CD4-positive, alpha-beta T cell (primary cell): ENCODE measurements at regions of chr7 and their contacts with region 1.

Region 1: GRCh38 chr7:148884299-148885022 is 370 bp upstream of the EZH2 start:
- DNase-seq: peak; percentile 84 to 97 (median 90)
- ATAC-seq: peak; percentile 91
- H3K4me3 ChIP-seq: peak overlapping the region; percentile 88
- H3K4me3 Mint-ChIP-seq: peak overlapping the region; percentile 95
- H3K27ac ChIP-seq: peak overlapping the region; percentile 15 to 86
- H3K27ac Mint-ChIP-seq: peak overlapping the region; percentile 88
- H3K4me1 ChIP-seq: peaks cover 16% of the 10 kb centered on the region
- H3K4me1 Mint-ChIP-seq: peaks cover 30% of the 10 kb centered on the region
- H3K27me3 ChIP-seq: no peaks in the 10 kb centered on the region
- H3K27me3 Mint-ChIP-seq: no peaks in the 10 kb centered on the region
- CTCF ChIP-seq: no peak

Region 2: GRCh38 chr7:148385009-148385682 is 499.3 kb before region 1 on chr7:
- CTCF ChIA-PET with region 1: no interaction called
- POLR2A ChIA-PET with region 1: no interaction called
- intact Hi-C with region 1: no loop called
- DNase-seq: no peak
- ATAC-seq: no peak
- H3K4me3 ChIP-seq: no peak overlapping the region
- H3K4me3 Mint-ChIP-seq: no peak overlapping the region
- H3K27ac ChIP-seq: no peak overlapping the region
- H3K27ac Mint-ChIP-seq: no peak overlapping the region
- H3K4me1 ChIP-seq: no peaks in the 10 kb centered on the region
- H3K4me1 Mint-ChIP-seq: no peaks in the 10 kb centered on the region
- H3K27me3 ChIP-seq: no peaks in the 10 kb centered on the region
- H3K27me3 Mint-ChIP-seq: peaks cover 5% of the 10 kb centered on the region
- CTCF ChIP-seq: no peak

Region 3: DNA sequence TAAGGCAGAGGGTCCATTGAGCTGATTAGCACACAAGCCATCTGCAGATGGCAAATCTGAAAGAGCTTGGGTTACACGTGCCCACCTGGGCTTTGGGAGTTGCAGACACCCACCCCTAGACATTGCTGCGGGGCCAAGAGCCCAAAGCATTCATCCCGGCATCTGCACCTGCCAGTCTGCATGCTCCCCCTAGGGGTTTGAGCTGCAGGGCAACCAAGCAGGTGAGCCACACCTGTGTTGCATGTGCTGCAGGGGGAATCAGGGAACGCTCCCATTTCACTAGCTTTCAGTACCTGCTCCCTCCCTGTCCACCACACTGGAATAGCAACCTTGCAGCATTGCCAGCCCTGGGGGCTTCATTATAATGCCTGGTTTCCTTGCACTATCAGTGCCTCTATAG is 272.8 kb before region 1 on chr7:
- CTCF ChIA-PET with region 1: no interaction called
- POLR2A ChIA-PET with region 1: no interaction called
- intact Hi-C with region 1: no loop called
- DNase-seq: no peak
- ATAC-seq: no peak
- H3K4me3 ChIP-seq: no peak overlapping the region
- H3K4me3 Mint-ChIP-seq: no peak overlapping the region
- H3K27ac ChIP-seq: no peak overlapping the region
- H3K27ac Mint-ChIP-seq: no peak overlapping the region
- H3K4me1 ChIP-seq: peaks cover 6% of the 10 kb centered on the region
- H3K4me1 Mint-ChIP-seq: peaks cover 13% of the 10 kb centered on the region
- H3K27me3 ChIP-seq: peaks cover 0 to 4% of the 10 kb centered on the region in 2 experiments
- H3K27me3 Mint-ChIP-seq: peaks cover 33% of the 10 kb centered on the region
- CTCF ChIP-seq: no peak

Region 4: GRCh38 chr7:148856891-148857290 is 27.6 kb before region 1 on chr7:
- CTCF ChIA-PET with region 1: interaction called, 12 read pairs
- POLR2A ChIA-PET with region 1: interaction called, 9 read pairs
- intact Hi-C with region 1: loop called in 1 of 2 experiments (anchors 2 kb)
- DNase-seq: peak in 2 of 14 experiments; percentile 58 to 68
- ATAC-seq: no peak
- H3K4me3 ChIP-seq: no peak overlapping the region
- H3K4me3 Mint-ChIP-seq: no peak overlapping the region
- H3K27ac ChIP-seq: no peak overlapping the region
- H3K27ac Mint-ChIP-seq: no peak overlapping the region
- H3K4me1 ChIP-seq: peaks cover 6% of the 10 kb centered on the region
- H3K4me1 Mint-ChIP-seq: peaks cover 17% of the 10 kb centered on the region
- H3K27me3 ChIP-seq: no peaks in the 10 kb centered on the region
- H3K27me3 Mint-ChIP-seq: no peaks in the 10 kb centered on the region
- CTCF ChIP-seq: no peak

Region 5: GRCh38 chr7:148914208-148914777 is 29.8 kb after region 1 on chr7:
- CTCF ChIA-PET with region 1: no interaction called
- POLR2A ChIA-PET with region 1: interaction called, 37 read pairs
- intact Hi-C with region 1: loop called (anchors 2 kb)
- DNase-seq: peak in 3 of 14 experiments; percentile 17 to 34 (median 27)
- ATAC-seq: peak; percentile 19
- H3K4me3 ChIP-seq: no peak overlapping the region
- H3K4me3 Mint-ChIP-seq: peak overlapping the region; percentile 51
- H3K27ac ChIP-seq: peak overlapping the region; percentile 18 to 57
- H3K27ac Mint-ChIP-seq: peak overlapping the region; percentile 79
- H3K4me1 ChIP-seq: peaks cover 49% of the 10 kb centered on the region
- H3K4me1 Mint-ChIP-seq: peaks cover 65% of the 10 kb centered on the region
- H3K27me3 ChIP-seq: no peaks in the 10 kb centered on the region
- H3K27me3 Mint-ChIP-seq: no peaks in the 10 kb centered on the region
- CTCF ChIP-seq: no peak

Region 6: DNA sequence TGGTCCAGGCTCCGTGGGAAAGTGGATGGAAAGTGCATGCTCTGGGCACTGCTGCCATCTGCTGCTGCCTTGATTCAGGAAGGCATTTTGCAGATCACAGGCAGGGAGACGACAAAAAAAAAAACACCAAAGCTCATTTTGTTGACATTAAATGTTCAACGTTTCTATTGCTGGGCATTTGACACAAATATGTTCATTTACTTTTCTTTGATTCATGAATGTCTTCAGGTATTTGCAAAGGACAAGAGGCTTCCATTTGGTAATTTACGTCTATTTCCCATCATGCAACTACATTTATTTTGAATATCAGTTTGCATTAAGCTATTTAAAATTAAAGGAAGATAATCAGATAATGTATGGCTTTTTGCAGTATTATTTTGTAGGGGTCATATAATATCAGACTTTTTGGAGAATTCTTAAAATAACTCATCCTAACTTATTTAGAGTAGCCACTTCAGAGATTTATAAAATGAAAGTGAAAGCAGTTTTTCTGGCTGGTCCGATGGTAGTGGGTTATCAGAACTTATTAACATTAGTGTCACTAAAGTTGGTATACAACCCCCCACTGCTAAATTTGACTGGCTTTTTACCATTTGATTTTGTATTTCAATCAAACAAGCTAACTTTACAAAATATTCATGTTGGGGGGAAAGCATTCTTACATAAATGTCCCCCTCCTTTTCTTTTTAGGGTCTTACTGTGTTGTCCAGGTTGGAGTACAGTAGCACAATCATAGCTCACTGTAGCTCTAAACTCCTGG is 78.5 kb after region 1 on chr7:
- CTCF ChIA-PET with region 1: interaction called, 4 read pairs
- POLR2A ChIA-PET with region 1: interaction called, 10 read pairs
- intact Hi-C with region 1: no loop called
- DNase-seq: peak; percentile 42 to 85 (median 57)
- ATAC-seq: peak; percentile 66
- H3K4me3 ChIP-seq: peak overlapping the region; percentile 72
- H3K4me3 Mint-ChIP-seq: peak overlapping the region; percentile 94
- H3K27ac ChIP-seq: peak overlapping the region in 1 of 2 donors; percentile 80
- H3K27ac Mint-ChIP-seq: peak overlapping the region; percentile 89
- H3K4me1 ChIP-seq: peaks cover 28% of the 10 kb centered on the region
- H3K4me1 Mint-ChIP-seq: peaks cover 25% of the 10 kb centered on the region
- H3K27me3 ChIP-seq: no peaks in the 10 kb centered on the region
- H3K27me3 Mint-ChIP-seq: no peaks in the 10 kb centered on the region
- CTCF ChIP-seq: peak; percentile 95

Region 7: DNA sequence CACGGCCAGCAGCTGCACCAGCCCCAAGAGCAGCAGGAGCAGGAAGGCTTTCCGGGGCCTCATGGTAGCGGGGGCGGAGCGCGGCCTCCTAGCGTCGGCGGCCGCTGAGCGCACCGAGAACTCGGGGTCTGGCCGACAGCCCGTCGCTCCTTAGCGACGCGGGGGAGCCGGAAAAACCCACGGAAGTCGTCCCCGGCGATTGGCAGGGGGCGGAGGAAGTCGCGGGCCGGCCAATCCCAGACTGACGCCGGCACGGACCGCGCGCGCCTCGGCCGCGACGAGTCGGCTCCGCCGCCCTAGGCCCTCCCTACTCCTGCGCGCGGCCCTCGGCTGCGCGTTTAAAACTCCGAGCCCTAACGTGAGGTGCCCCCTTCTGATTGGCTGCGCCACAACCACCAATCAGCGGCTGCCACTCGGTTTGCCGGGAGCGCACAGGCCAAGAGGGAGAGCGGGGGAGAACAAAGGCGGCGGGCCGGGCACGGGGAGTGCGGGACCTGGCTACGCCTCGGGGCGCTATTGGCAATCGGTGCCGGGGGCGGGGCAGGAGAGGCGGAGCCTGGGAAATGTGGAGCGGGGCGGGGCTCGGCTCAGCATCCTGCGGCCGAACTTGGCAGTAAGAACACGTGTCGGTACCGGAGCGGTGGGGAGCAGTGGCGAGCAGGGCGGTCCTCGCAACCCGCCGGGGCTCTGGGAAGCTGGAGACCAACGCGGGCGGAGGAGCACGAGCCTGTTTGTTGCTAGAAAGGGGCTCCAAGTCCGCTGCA is 144.1 kb after region 1 on chr7 and contains the start of gene PDIA4:
- CTCF ChIA-PET with region 1: no interaction called
- POLR2A ChIA-PET with region 1: no interaction called
- intact Hi-C with region 1: loop called in 1 of 2 experiments (anchors 2 kb)
- DNase-seq: peak; percentile 96 to 100 (median 99)
- ATAC-seq: peak; percentile 88
- H3K4me3 ChIP-seq: peak within 1 kb of the TSS; percentile 87
- H3K4me3 Mint-ChIP-seq: peak within 1 kb of the TSS; percentile 90
- H3K27ac ChIP-seq: peak within 1 kb of the TSS; percentile 70 to 71
- H3K27ac Mint-ChIP-seq: peak within 1 kb of the TSS; percentile 91
- H3K4me1 ChIP-seq: peaks cover 40% of the 10 kb centered on the region
- H3K4me1 Mint-ChIP-seq: peaks cover 54% of the 10 kb centered on the region
- H3K27me3 ChIP-seq: no peaks in the 10 kb centered on the region
- H3K27me3 Mint-ChIP-seq: no peaks in the 10 kb centered on the region
- CTCF ChIP-seq: no peak
- total RNA-seq, gene PDIA4: 19.5 to 19.9 TPM

Region 8: DNA sequence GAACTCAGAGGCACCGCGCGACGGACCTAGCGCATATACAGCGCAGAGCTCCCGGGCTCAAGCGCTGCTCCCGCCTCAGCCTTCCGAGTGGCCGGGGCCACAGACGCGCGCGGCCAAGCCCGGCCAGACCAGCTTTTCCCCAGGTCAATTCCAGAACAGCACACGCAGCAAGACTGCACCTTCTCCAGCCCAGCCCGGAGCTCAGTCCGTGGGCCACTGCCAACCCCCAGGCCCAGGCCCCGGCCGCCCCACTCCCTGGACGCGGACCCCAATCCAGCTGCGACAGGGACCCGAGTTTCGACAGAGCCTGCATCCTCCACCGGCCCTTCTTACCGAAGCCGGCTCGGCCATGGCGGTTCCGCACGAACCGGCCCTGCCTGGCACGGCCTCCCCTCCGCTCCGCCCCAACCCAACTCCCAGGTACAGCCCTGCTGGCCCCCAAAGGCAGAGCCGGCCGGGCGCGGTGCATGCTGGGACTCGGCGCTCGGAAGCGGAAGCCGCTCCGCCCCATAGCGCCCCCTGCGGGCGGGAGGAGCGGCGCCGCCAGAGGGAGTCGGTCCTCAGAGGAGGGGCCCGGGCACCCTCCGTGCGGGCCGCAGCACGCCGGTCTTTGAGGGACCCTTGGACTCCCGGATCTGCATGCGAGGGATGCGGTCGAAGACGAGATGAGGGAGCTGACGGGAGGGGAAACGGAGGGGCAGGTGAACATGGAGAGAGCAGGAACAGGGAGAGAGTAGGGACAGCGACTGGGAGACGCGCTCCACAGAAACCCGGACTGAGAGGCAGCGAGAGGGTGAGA is 241.6 kb after region 1 on chr7 and contains the start of gene ZNF425:
- CTCF ChIA-PET with region 1: no interaction called
- POLR2A ChIA-PET with region 1: no interaction called
- intact Hi-C with region 1: loop called in 1 of 2 experiments (anchors 10 kb)
- DNase-seq: peak; percentile 87 to 96 (median 93)
- ATAC-seq: peak; percentile 83
- H3K4me3 ChIP-seq: peak within 1 kb of the TSS; percentile 100
- H3K4me3 Mint-ChIP-seq: peak within 1 kb of the TSS; percentile 100
- H3K27ac ChIP-seq: peak within 1 kb of the TSS; percentile 79 to 80
- H3K27ac Mint-ChIP-seq: peak within 1 kb of the TSS; percentile 96
- H3K4me1 ChIP-seq: peaks cover 12% of the 10 kb centered on the region
- H3K4me1 Mint-ChIP-seq: peaks cover 24% of the 10 kb centered on the region
- H3K27me3 ChIP-seq: no peaks in the 10 kb centered on the region
- H3K27me3 Mint-ChIP-seq: no peaks in the 10 kb centered on the region
- CTCF ChIP-seq: peak; percentile 94
- total RNA-seq, gene ZNF425: 0.22 to 0.39 TPM